AG04449 (cell line): ENCODE measurements at regions of chr15 and their contacts with region 1.

Region 1: GRCh38 chr15:66851226-66852071 is 149.4 kb downstream of the SMAD6 start:
- DNase-seq: no peak
- H3K4me3 ChIP-seq: no peak overlapping the region
- CTCF ChIP-seq: peak; percentile 98

Region 2: DNA sequence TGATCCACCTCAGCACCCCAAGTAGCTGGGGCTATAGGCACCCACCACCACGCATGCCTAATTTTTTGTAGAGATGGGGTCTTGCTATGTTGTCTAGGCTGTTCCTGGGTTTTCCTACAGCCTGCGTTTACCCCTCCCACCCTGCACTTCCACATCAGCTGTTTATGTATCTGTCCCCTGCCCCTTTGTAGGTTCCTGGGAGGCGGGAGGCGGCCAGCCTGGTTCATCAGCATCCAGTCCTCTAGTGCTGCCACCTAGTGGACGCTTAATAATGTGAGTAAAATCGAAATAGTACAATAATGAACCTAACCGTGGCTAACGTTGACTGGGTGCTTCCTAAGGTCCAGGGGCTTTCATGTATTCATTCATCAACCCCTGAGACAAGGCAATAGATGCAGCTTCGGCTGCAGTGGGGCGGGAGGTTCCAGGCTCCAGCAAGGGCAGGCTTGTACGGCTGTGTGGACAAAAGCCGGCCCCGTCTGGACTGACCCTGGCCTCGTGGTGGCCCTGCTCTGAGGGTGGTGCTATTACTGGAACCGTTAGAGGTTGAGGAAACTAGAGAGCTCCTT is 284.4 kb before region 1 on chr15:
- CTCF ChIA-PET with region 1: interaction called, 30 read pairs
- POLR2A ChIA-PET with region 1: no interaction called
- DNase-seq: no peak
- H3K4me3 ChIP-seq: no peak overlapping the region
- CTCF ChIP-seq: peak; percentile 56

Region 3: DNA sequence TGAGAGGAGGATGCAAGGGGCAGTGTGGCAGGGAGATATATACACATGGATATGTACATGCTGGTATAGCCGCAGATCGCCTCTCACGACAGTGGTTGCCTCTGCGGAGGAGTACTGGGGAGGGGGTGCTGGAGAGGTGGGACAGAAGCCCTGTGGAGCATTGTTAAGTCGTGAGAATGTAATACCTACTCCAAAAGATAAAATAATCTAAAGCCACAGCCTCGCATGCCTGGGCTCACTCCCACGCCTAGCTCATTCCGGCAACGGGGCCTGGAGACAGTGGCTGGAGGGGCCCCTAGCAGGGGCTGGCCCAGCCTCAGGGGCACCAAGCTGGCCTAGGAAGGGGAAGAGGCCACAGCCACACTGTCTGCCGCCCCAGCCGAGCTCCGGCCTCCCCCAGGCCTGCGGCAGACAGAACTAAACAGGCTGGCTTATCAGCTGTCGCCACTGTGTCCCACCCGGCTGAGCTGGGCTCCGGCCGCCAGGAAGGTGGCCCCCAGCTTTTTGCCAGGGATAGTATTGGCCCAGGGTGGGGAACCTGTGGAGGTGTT is 220.6 kb before region 1 on chr15:
- CTCF ChIA-PET with region 1: interaction called, 10 read pairs
- POLR2A ChIA-PET with region 1: no interaction called
- DNase-seq: no peak
- H3K4me3 ChIP-seq: no peak overlapping the region
- CTCF ChIP-seq: no peak

Region 4: GRCh38 chr15:66735909-66736305 is 115.5 kb before region 1 on chr15:
- CTCF ChIA-PET with region 1: interaction called, 32 read pairs
- POLR2A ChIA-PET with region 1: no interaction called
- DNase-seq: no peak
- H3K4me3 ChIP-seq: no peak overlapping the region
- CTCF ChIP-seq: no peak

Region 5: DNA sequence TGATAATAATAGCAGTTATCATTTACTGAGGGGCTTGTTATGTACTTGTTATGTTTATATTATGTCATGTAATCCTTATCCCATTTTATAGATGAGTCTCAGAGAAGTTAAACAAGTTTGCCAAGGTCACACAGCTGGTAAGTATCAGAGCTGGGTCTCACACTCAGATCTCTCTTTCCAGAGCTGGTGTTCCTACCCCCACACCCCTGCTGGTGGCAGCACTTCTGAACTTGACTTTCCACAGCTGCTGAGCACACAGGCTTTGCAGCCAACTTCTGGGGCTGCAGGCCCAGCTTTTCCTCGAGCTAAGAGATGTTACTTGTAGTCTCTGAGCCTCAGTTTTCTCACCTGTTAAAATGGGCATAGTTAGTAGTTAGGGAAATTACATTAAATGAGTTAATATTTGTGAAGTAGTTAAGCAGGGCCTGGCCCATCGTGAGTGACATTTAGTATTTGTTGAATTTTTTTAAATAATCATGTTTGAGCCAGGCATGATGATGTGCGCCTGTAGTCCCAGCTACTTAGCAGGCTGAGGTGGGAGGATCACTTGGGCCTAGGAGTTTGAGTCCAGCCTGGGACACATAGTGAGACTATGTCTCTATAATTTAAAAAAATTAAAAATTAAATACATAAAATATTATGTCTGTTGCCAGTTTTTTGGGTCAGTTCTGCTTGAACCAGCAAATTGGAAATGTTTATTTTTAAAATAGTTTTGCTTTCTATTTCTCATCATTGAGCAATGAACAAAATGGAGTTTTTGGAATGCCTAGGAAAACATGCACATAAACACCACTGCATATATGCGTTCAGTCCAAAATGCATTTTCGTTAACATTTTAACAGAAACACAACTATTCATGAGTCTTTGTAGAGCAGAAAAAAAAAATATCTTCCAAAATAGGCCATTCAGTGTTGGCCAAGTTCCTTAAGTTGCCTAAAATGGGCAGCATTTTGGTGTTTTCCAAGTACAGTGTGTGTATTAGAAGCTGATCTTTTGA is 62.1 kb before region 1 on chr15:
- CTCF ChIA-PET with region 1: interaction called, 142 read pairs
- POLR2A ChIA-PET with region 1: no interaction called
- DNase-seq: no peak
- H3K4me3 ChIP-seq: no peak overlapping the region
- CTCF ChIP-seq: peak; percentile 65

Region 6: DNA sequence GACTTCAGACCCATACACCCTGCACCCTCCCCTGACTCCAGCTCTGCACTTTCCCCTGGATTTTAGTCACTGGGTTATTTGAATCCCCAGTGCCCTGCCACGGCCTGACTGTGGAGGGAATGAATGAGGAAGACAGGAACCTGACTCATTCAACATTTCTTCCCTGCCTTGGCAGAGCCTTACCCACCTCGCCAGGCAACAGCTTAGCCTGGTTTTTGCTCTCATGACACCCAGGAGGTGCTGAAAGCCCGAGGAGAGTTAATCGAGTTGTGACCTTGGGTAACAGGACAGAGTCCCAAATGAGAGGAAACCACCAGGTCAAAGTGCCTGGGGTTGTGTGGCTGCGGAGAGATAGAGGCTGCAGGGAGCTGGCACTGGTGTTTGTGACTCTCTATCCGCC is 21.1 kb before region 1 on chr15:
- CTCF ChIA-PET with region 1: interaction called, 17 read pairs
- POLR2A ChIA-PET with region 1: no interaction called
- DNase-seq: no peak
- H3K4me3 ChIP-seq: no peak overlapping the region
- CTCF ChIP-seq: no peak

Region 7: GRCh38 chr15:66876420-66876729 is 24.9 kb after region 1 on chr15:
- CTCF ChIA-PET with region 1: interaction called, 18 read pairs
- POLR2A ChIA-PET with region 1: no interaction called
- DNase-seq: no peak
- H3K4me3 ChIP-seq: no peak overlapping the region
- CTCF ChIP-seq: no peak

Region 8: GRCh38 chr15:67322481-67322880 is 471.0 kb after region 1 on chr15:
- CTCF ChIA-PET with region 1: no interaction called
- POLR2A ChIA-PET with region 1: no interaction called
- DNase-seq: no peak
- H3K4me3 ChIP-seq: no peak overlapping the region
- CTCF ChIP-seq: no peak